OCI-LY7 (cell line): ENCODE measurements at regions of chr1 and their contacts with region 1.

Region 1: DNA sequence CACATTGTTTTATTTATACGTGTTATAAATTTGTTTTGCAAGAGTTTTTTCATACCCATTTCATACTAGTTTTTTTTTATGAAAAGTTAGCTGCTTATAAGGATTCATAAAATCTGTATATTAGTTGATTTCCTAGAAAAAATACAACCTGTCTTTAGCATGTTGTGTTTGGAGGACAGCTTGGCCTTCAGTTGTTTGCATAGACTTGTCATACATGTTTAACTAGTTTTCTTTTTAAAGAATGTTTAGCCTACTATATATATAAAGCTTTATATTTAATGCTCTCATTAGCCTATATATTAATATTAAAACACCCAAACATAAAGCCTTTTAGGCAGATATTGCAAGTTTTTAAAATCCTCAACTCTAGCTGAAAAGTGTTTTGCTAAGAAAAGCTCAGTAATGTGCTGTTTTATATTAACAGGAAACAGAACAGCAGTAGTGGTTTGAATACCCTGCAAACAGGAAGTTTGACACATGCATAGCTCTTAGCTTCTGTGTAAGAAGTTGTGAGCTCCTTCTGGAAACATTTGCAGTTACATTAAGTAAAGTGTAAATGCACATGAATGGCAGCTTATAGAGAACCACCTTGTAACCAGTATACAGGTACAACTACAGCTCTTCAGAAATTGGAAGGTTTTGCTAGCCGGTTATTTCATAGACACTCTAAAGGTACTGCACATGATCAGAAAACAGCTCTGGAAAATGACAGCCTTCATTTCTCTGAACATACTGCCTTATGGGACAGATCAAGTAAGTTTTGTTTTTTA is at the start of gene PRKACB:
- DNase-seq: peak; percentile 86
- H3K4me3 ChIP-seq: peak within 1 kb of the TSS; percentile 78
- H3K27ac ChIP-seq: peak within 1 kb of the TSS; percentile 89
- H3K4me1 ChIP-seq: peaks cover 38% of the 10 kb centered on the region
- CTCF ChIP-seq: no peak
- total RNA-seq, gene PRKACB: 14.1 and 16.6 TPM in 2 replicates

Region 2: GRCh38 chr1:84164567-84165021 is 20.6 kb after region 1 on chr1:
- CTCF ChIA-PET with region 1: no interaction called
- POLR2A ChIA-PET with region 1: interaction called, 11 read pairs
- intact Hi-C with region 1: no loop called
- DNase-seq: no peak
- H3K4me3 ChIP-seq: no peak overlapping the region
- H3K27ac ChIP-seq: no peak overlapping the region
- H3K4me1 ChIP-seq: peaks cover 20% of the 10 kb centered on the region
- CTCF ChIP-seq: no peak

Region 3: DNA sequence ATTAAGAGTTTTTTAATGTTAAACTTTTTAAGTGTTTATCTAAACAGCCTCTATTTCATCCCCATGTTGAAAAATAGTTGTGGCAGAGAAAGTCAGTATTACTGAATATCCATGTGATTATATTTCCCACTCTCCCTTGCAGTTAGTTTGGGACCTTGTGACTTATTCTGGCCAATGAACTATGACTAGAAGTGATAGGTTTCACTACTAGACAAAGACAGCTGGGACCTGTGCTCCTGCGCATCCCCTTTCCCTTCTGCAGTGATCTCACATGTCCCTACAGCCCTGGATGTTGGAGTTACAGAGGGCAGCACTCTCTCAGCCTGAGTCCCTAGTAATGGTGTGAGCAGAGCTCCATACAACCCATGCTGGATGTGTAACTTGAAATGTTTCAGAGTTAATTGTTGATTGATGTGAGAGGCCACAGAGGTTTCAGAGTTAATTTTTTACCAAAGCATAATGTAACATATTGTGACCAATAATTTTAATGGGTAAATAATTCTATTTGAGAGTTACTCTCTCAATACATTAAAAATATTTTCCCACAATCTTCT is 138.9 kb after region 1 on chr1:
- CTCF ChIA-PET with region 1: no interaction called
- POLR2A ChIA-PET with region 1: no interaction called
- intact Hi-C with region 1: no loop called
- DNase-seq: no peak
- H3K4me3 ChIP-seq: no peak overlapping the region
- H3K27ac ChIP-seq: no peak overlapping the region
- H3K4me1 ChIP-seq: no peaks in the 10 kb centered on the region
- CTCF ChIP-seq: no peak

Region 4: GRCh38 chr1:84433258-84434080 is 289.5 kb after region 1 on chr1:
- CTCF ChIA-PET with region 1: interaction called, 4 read pairs
- POLR2A ChIA-PET with region 1: interaction called, 30 read pairs
- intact Hi-C with region 1: loop called (anchors 1 kb)
- DNase-seq: peak; percentile 76
- H3K4me3 ChIP-seq: peak overlapping the region; percentile 52
- H3K27ac ChIP-seq: no peak overlapping the region
- H3K4me1 ChIP-seq: peaks cover 26% of the 10 kb centered on the region
- CTCF ChIP-seq: peak; percentile 95

Region 5: DNA sequence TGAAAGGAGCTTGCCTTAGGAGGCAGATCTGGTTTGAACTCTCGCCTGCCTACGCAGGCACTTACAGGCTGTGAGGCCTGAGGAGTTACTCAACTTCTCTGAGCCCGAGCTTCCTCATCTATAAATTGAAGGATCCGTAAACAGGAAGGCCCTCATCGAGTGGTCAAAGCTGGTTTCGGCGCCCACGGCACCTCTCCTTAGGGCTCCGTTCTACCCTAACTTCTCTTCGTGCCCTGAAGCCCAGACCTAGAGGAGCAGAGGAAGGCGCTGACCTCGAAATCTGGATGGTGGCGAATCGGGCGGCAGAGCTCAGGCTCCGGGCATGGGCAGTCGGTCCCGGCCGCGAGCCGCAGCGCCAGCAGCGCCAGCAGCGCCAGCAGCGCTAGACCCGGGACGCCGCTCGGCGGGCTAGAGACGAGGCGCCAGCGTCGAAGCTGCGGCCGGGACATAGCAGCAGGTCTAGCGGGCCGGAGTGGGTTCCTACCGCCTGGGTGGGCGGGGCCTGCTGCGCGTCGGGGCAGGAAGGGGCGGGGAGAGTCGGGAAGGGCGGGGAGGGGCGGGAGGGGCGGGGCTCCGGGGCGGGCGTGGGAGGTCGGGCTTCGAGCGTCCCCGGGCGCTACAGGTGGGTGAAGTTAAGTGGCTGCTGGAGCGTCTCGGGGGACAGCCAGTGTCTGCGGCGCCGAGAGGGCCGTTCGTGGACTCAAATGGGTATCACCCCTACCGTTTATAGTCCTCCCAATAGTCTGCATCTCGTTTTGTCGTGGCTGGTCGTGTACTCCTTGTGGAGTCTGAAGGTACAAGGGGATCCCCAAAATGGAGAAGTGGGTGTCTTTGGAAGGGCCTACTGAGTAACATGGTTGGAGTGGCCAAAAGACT is 430.2 kb after region 1 on chr1 and contains the start of gene CTBS:
- CTCF ChIA-PET with region 1: interaction called, 3 read pairs
- POLR2A ChIA-PET with region 1: interaction called, 16 read pairs
- intact Hi-C with region 1: no loop called
- DNase-seq: peak; percentile 95
- H3K4me3 ChIP-seq: peak within 1 kb of the TSS; percentile 72
- H3K27ac ChIP-seq: peak within 1 kb of the TSS; percentile 81
- H3K4me1 ChIP-seq: peaks cover 20% of the 10 kb centered on the region
- CTCF ChIP-seq: no peak
- total RNA-seq, gene CTBS: 4.5 and 5.9 TPM in 2 replicates

Region 6: DNA sequence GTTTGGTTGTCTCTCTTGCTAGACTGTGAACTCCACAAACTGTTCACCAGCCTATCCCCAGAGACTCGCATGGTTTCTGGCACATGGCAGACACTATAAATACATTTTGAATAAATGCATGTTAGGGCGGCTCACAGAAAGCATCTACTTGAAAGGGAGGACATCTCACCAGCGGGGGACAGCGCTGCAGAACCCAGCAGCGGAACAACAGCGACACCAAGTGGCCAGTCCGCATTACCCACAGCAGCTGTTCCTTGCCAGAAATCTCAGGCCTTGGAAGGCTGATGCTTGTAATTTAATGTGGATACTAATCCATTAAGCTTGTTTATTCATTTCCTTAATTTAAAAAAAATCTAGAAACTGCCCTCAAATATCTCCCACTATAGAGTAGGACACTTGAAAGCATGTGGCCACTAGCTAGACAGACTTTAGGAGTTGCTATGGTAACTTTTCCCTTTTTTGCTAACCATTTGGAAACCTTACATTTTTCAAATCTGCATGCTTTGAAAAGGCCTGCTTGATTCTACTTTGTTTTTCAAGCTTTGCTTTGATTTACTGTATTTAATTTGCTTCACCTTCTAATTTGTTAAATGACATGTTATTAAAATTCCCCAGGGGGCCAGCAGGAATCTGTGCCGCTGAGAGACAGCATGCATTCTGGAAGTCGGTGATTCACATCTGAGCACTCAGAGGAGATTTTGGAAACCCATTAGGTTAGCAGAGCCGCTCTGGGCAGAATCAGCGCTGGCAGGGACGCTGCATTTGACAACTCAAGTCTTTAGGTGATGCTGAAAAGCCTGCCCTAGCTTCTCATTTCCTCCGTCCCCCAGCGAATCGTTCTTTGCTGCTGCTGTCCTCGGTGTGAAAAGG is 609.8 kb after region 1 on chr1:
- CTCF ChIA-PET with region 1: no interaction called
- POLR2A ChIA-PET with region 1: interaction called, 4 read pairs
- intact Hi-C with region 1: loop called (anchors 1 kb)
- DNase-seq: peak; percentile 72
- H3K4me3 ChIP-seq: no peak overlapping the region
- H3K27ac ChIP-seq: no peak overlapping the region
- H3K4me1 ChIP-seq: no peaks in the 10 kb centered on the region
- CTCF ChIP-seq: peak; percentile 99